ENCODE measurements at regions of chr20 and their contacts with region 1.

Region 1: GRCh38 chr20:50904067-50904570 is 27.1 kb downstream of the ADNP start:
- DNase-seq: no peak
- H3K4me3 ChIP-seq: no peak overlapping the region
- H3K27ac ChIP-seq: no peak overlapping the region
- H3K4me1 ChIP-seq: no peaks in the 10 kb centered on the region
- H3K27me3 ChIP-seq: no peaks in the 10 kb centered on the region
- CTCF ChIP-seq: no peak

Region 2: DNA sequence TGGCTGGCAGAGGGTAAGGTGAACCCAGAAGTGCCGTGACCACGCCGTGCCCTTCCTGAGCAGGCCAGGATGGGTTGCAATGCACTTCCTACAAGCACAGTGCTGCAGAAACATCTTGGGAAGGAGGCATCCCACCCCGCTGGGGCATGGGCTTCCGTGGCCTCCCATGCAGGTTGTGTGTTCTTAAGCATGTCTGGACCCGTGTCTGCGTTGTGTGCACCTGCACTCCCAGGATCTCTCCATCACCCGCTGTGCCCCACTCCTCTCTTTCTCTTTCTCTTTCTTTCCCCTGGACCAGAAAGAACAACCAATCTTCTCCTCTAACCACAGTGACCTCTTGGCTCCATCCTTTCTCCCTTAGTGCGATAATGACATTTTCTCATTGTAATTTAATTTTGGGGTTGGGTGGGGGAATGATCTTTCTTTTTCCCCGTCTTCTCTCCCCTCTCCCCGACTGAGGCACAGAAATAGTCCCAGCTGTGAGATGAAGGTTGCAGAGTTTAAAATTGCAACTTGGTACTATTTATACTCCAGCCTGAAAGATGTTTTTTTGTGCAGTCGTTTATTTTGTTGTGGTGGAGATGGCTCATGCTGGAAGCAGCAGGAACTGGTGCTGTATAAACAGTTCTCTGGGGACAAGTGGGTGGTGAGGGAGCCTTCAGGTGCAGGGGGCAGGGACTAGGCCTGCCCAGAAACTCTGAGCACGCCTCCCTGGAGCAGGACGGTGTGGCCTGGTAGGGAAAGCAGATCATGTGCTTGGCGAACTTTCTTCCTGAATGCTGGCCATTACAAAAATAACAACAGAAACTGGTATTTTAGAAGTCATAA is 88.7 kb before region 1 on chr20:
- CTCF ChIA-PET with region 1: no interaction called
- POLR2A ChIA-PET with region 1: no interaction called
- intact Hi-C with region 1: loop called (anchors 5 kb)
- DNase-seq: peak; percentile 46 to 53
- H3K4me3 ChIP-seq: no peak overlapping the region
- H3K27ac ChIP-seq: no peak overlapping the region; the same call in 1 of the 2 replicates
- H3K4me1 ChIP-seq: 0 out of 2 replicates have a peak, but pooled peaks cover 7% of the 10 kb centered on the region
- H3K27me3 ChIP-seq: no peaks in the 10 kb centered on the region
- CTCF ChIP-seq: no peak